CD8-positive, alpha-beta T cell (primary cell): ENCODE measurements at regions of chr15 and their contacts with region 1.

Region 1: DNA sequence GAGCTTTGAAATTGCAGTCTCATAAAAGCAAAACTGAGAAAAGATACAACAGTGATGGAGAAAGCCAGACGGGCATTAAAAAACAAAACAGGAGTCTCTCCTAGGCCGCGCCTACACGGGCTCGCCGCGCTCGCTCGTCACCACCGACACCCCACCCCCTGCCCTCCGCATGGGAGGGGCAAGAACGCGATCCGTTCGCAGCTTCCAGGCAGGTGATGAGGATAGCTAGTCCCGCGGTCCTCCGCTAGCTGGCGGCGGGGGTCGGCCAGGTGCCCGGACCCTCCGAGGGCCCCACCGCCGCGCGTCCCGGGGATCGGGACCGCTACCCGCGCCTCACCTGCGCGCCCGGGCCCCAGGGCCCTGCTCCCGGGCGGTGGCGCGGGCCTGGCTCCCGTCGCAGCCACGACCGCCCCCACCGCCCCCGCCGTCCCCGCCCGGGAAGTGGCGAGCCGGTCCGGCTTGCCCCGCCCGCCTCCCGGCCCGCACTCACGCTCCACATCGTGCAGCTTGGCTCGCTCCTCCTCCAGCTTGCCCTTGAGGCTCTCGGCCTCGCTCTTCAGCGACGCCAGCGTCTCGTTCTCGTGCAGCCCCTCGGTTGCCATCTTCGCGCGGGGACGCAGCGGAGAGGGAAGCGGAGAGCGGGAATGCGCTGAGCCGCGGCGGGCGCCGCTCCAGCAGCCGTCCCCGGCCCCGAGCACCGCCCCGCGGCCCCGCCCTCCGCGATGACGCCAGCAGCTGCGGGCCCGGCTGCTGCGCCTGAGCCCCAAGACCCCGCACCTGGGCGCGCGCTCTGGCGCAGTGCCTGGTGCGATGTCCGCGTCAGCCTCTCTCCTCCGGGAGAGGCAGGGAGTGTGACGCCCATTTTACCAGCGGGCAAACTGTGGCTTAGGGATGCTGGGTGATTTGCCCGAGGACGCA is 11.7 kb downstream of the GNB5 start:
- DNase-seq: peak; percentile 83 to 95 (median 89)
- ATAC-seq: peak; percentile 84
- H3K4me3 ChIP-seq: peak overlapping the region; percentile 94 to 96
- H3K4me3 Mint-ChIP-seq: peak overlapping the region; percentile 93
- H3K27ac ChIP-seq: peak overlapping the region; percentile 95 to 99
- H3K27ac Mint-ChIP-seq: peak overlapping the region; percentile 99
- H3K4me1 ChIP-seq: peaks cover 16% of the 10 kb centered on the region
- H3K4me1 Mint-ChIP-seq: peaks cover 38% of the 10 kb centered on the region
- H3K27me3 ChIP-seq: no peaks in the 10 kb centered on the region
- H3K27me3 Mint-ChIP-seq: no peaks in the 10 kb centered on the region
- CTCF ChIP-seq: no peak

Region 2: GRCh38 chr15:51737280-51738017 is 442.1 kb before region 1 on chr15 and contains the start of gene LYSMD2:
- CTCF ChIA-PET with region 1: no interaction called
- POLR2A ChIA-PET with region 1: interaction called, 10 read pairs
- intact Hi-C with region 1: loop called (anchors 5 kb)
- DNase-seq: peak; percentile 30 to 85 (median 71)
- ATAC-seq: peak; percentile 51
- H3K4me3 ChIP-seq: peak within 1 kb of the TSS; percentile 62 to 70
- H3K4me3 Mint-ChIP-seq: peak within 1 kb of the TSS; percentile 91
- H3K27ac ChIP-seq: peak within 1 kb of the TSS; percentile 66 to 92
- H3K27ac Mint-ChIP-seq: peak within 1 kb of the TSS; percentile 99
- H3K4me1 ChIP-seq: peaks cover 43% of the 10 kb centered on the region
- H3K4me1 Mint-ChIP-seq: peaks cover 55% of the 10 kb centered on the region
- H3K27me3 ChIP-seq: no peaks in the 10 kb centered on the region
- H3K27me3 Mint-ChIP-seq: no peaks in the 10 kb centered on the region
- CTCF ChIP-seq: no peak
- total RNA-seq, gene LYSMD2: 18.9 to 20.0 TPM

Region 3: DNA sequence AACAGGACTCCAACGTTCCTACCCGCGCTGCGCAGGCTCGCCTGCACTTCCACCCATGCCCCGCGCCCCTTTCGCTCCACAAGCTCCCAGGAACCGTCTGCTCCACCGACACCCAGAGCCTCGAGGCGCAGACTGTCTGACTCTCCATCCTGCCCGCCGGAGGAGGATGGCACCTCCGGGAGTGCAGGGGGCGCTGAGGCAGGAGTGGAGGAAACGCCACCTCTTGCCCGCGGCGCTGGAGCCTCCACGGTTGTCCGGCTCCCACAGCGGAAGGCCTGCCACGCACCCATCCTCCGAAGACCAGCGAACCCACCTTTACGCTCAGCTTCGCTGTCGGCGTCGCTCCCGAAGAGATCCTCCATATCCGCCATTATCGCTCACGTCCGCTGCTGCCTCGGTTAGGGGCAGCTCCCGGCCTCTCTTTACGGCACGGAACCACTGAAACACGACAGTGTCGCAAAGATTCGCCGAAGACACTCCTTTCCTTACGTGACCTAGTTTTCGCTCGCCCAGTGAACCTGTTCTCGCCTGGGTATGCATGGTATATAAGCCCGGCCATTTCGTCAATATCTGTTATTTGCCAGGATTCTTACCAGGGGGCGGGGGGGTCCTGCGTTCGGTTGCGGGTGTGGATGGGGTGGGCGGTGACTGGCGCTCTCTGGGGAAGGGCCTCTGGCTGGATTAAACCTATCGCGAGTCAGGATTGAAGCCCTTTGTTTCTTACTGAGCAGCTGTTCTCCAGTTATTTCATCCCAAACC is 208.0 kb before region 1 on chr15 and contains the start of gene LEO1:
- CTCF ChIA-PET with region 1: no interaction called
- POLR2A ChIA-PET with region 1: interaction called, 18 read pairs
- intact Hi-C with region 1: loop called (anchors 1 to 2 kb)
- DNase-seq: peak; percentile 72 to 97 (median 88)
- ATAC-seq: peak; percentile 91
- H3K4me3 ChIP-seq: peak within 1 kb of the TSS; percentile 85 to 99
- H3K4me3 Mint-ChIP-seq: peak within 1 kb of the TSS; percentile 99
- H3K27ac ChIP-seq: peak within 1 kb of the TSS; percentile 69 to 87
- H3K27ac Mint-ChIP-seq: peak within 1 kb of the TSS; percentile 99
- H3K4me1 ChIP-seq: peaks cover 13% of the 10 kb centered on the region
- H3K4me1 Mint-ChIP-seq: peaks cover 21% of the 10 kb centered on the region
- H3K27me3 ChIP-seq: no peaks in the 10 kb centered on the region
- H3K27me3 Mint-ChIP-seq: no peaks in the 10 kb centered on the region
- CTCF ChIP-seq: peak; percentile 26
- total RNA-seq, gene LEO1: 9.4 TPM

Region 4: DNA sequence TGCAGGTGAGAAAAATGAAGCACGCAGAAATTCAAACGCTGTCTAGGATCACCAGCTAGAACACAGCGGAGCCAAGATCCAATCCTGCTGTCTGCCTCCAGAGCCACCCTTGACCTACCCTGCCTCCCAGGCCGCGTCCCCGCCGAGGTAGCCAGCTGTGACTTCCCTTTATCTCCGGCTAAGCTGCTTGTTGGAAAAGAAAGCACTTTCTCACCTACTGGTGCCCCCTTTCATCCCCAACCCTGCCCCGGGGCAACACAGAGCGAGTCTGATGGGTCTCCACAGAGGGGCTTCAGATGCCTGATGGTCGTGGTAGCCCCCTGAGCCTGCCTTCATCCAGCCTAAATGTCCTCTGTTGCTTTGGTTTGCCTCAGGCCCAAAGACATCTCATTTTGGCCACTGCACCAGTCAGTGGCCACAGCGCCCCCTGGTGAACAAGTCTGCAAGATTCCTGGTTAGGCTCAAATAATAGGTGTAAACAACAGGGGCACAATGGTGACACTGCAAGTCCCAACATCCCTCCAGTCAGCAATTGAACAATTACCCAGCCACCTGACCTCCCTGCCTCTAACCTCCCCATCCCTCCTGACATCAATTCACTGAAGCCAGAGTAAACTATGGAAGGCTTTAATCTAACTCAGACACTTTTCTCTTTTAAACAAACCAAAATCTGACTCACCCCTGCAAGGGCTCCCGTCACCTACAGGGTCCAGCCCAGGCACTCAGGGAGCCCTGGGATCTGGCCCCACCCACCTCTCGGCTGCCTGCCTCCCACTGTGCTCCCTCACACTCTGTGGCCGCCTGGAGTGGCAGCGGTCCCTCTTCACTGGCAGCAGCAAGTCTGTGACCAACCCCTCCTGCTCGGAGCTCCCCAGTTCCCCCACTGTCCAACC is 39.7 kb before region 1 on chr15:
- CTCF ChIA-PET with region 1: interaction called, 3 read pairs
- POLR2A ChIA-PET with region 1: no interaction called
- intact Hi-C with region 1: loop called in 1 of 2 experiments (anchors 5 kb)
- DNase-seq: peak; percentile 25 to 72 (median 63)
- ATAC-seq: peak; percentile 58
- H3K4me3 ChIP-seq: no peak overlapping the region
- H3K4me3 Mint-ChIP-seq: no peak overlapping the region
- H3K27ac ChIP-seq: no peak overlapping the region
- H3K27ac Mint-ChIP-seq: no peak overlapping the region
- H3K4me1 ChIP-seq: peaks cover 22% of the 10 kb centered on the region
- H3K4me1 Mint-ChIP-seq: peaks cover 21% of the 10 kb centered on the region
- H3K27me3 ChIP-seq: no peaks in the 10 kb centered on the region
- H3K27me3 Mint-ChIP-seq: no peaks in the 10 kb centered on the region
- CTCF ChIP-seq: peak; percentile 80

Region 5: DNA sequence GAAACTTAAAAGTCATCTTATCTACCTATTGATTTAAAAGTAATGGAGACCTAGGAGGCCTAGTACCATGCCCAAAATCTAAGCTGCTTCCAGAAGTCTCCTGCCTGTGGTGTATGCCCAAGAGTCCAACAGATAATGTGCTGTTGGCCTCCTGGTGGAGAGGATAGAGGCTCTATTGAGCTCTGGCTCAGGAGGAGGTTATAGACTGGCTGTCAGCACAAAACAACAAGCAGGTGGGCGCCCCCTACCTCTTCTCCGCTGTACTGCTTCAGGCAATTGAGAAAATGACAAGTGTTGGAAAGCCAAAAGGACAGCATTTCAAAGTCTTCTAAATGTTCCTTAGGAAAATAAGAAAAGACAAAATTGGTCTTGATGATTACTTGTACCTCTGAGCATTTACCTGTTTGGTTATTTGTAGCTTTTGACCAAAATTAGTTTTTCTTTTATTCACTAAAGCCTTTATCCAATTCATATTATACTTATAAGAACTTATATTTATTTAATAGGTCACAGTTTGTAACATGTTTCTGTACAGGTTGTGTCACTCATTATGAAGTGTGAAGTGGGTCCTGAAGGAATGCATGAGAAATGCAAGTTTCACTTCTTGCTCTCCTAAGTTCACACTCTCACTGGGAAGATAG is 28.9 kb after region 1 on chr15:
- CTCF ChIA-PET with region 1: interaction called, 17 read pairs
- POLR2A ChIA-PET with region 1: interaction called, 8 read pairs
- intact Hi-C with region 1: loop called (anchors 1 to 2 kb)
- DNase-seq: peak; percentile 52 to 81 (median 77)
- ATAC-seq: peak; percentile 100
- H3K4me3 ChIP-seq: no peak overlapping the region
- H3K4me3 Mint-ChIP-seq: no peak overlapping the region
- H3K27ac ChIP-seq: no peak overlapping the region
- H3K27ac Mint-ChIP-seq: no peak overlapping the region
- H3K4me1 ChIP-seq: no peaks in the 10 kb centered on the region
- H3K4me1 Mint-ChIP-seq: no peaks in the 10 kb centered on the region
- H3K27me3 ChIP-seq: no peaks in the 10 kb centered on the region
- H3K27me3 Mint-ChIP-seq: no peaks in the 10 kb centered on the region
- CTCF ChIP-seq: peak; percentile 88

Region 6: GRCh38 chr15:52227456-52227855 is 47.9 kb after region 1 on chr15:
- CTCF ChIA-PET with region 1: interaction called, 21 read pairs
- POLR2A ChIA-PET with region 1: interaction called, 13 read pairs
- intact Hi-C with region 1: loop called (anchors 2 to 5 kb)
- DNase-seq: peak; percentile 37 to 88 (median 67)
- ATAC-seq: peak; percentile 100
- H3K4me3 ChIP-seq: no peak overlapping the region
- H3K4me3 Mint-ChIP-seq: no peak overlapping the region
- H3K27ac ChIP-seq: no peak overlapping the region
- H3K27ac Mint-ChIP-seq: no peak overlapping the region
- H3K4me1 ChIP-seq: peaks cover 4% of the 10 kb centered on the region
- H3K4me1 Mint-ChIP-seq: peaks cover 20% of the 10 kb centered on the region
- H3K27me3 ChIP-seq: no peaks in the 10 kb centered on the region
- H3K27me3 Mint-ChIP-seq: no peaks in the 10 kb centered on the region
- CTCF ChIP-seq: peak; percentile 72